ENCODE measurements at regions of chr7 and their contacts with region 1.

Region 1: GRCh38 chr7:72281308-72281707 is 130.8 kb downstream of the CALN1 start:
- DNase-seq: no peak
- H3K4me3 ChIP-seq: no peak overlapping the region
- CTCF ChIP-seq: no peak

Region 2: GRCh38 chr7:71912476-71912875 is 368.8 kb before region 1 on chr7:
- in situ Hi-C with region 1: no loop called
- DNase-seq: no peak
- H3K4me3 ChIP-seq: no peak overlapping the region
- CTCF ChIP-seq: no peak

Region 3: GRCh38 chr7:72234086-72234485 is 47.2 kb before region 1 on chr7:
- in situ Hi-C with region 1: loop called (anchors 5 kb)
- DNase-seq: no peak
- H3K4me3 ChIP-seq: no peak overlapping the region
- CTCF ChIP-seq: no peak

Measured in astrocyte of the cerebellum (primary cell).